ENCODE measurements at regions of chr5 and their contacts with region 1.

Region 1: DNA sequence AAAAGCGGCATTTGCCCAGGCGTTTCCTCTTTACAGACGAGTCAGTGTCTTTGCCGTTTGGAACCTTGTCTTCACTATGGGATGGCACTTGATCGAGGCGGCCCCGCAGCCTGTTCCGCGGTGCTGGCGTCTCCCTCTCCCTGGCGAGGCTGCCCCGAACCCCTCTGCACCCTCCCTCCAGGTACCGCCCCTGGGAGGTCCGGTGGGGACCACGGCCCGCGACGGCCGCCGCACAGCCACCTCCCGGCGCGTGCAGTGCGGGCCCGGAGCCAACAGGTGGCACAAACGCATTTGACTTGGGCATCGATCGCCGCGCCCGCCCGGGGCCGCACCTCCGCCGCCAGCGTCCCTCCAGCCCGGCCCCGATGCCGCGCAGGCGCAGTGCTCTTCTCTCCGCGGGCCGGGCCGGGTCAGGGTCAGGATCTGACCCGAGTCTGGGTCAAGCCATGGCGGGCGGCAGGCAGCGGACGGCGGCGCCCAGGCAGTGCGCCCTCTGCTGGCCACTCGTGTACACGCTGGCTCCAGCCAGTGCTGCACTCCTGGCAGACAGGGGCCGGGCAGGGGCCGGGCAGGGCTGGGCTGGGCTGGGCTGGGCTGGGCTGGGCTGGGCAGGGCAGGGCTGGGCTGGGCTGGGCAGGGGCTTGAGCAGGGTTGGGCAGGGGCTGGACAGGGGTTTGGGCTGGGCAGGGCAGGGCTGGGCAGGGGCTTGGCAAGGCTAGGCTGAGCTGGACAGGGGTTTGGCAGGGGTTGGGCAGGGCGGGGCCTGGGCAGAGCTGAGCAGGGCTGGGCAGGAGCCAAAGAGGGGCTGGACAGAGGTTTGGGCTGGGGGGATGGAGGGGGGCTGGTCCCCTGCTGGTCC is 155.8 kb upstream of the IRX4 start:
- DNase-seq: peak; percentile 76
- ATAC-seq: peak; percentile 92
- H3K4me3 Mint-ChIP-seq: peak overlapping the region; percentile 28
- H3K27ac Mint-ChIP-seq: no peak overlapping the region
- H3K4me1 Mint-ChIP-seq: no peaks in the 10 kb centered on the region
- H3K27me3 Mint-ChIP-seq: peaks cover 25% of the 10 kb centered on the region

Region 2: DNA sequence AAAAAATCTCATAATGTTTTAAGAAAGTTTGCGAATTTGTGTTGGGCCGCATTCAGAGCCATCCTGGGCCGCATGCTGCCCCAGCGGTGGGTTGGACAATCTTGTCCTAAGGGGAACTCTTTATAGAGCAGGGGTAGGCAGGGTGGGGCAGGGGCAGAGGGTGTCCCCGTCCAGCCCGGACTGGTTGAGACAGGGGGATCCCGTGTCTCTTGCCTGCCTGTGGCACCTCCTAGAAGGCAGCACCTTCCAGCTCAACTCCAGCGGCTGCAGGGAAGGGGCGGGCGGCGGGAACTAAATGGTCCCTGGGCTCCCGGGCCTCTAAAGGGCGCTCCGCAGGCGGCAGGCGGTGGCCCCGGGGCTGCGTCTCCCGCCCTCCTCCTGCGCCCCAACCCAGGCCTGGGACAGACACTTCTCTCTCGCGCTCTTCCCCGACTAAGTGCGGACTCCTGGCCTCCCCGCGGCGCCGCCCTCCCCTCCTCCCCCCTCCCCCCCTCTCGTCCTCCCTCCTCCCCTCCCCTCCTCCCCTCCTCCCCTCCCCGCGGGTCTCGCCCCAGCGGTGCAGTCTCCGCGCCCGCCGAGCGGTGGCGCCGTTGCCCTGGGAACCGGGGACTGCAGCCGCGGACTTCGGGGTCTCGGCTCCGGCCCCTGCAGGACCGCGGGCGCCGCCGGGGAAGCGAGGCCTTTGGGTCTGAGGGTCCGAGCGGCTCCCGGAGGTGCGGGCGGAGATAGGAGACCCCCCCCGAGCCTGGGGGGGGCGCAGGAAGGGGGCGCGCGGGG is 371.6 kb before region 1 on chr5:
- CTCF ChIA-PET with region 1: no interaction called
- POLR2A ChIA-PET with region 1: no interaction called
- intact Hi-C with region 1: loop called in 1 of 2 experiments (anchors 1 kb)
- DNase-seq: peak; percentile 76
- ATAC-seq: peak; percentile 63
- H3K4me3 Mint-ChIP-seq: no peak overlapping the region
- H3K27ac Mint-ChIP-seq: no peak overlapping the region
- H3K4me1 Mint-ChIP-seq: peaks cover 13% of the 10 kb centered on the region
- H3K27me3 Mint-ChIP-seq: peaks cover 63% of the 10 kb centered on the region

Region 3: DNA sequence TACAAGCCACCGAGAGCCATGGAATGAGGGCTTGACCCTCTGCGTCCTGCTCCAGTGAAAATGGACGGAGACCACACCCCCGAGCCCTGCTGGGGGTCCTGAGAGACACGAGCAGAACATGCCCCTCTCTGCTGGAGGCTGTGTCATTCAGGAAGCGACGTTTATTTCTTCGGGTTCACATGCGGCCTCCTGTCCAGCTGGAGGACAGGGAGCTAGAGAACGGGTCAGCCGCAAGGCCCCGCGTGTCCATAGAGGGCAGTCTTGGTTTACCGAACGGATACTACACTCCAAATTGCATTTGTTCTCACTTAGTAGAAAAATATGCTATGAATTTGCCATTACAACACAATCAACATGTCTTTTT is 275.0 kb before region 1 on chr5:
- CTCF ChIA-PET with region 1: interaction called, 3 read pairs
- POLR2A ChIA-PET with region 1: no interaction called
- intact Hi-C with region 1: loop called in 1 of 2 experiments (anchors 1 kb)
- DNase-seq: peak; percentile 62
- ATAC-seq: peak; percentile 58
- H3K4me3 Mint-ChIP-seq: no peak overlapping the region
- H3K27ac Mint-ChIP-seq: no peak overlapping the region
- H3K4me1 Mint-ChIP-seq: no peaks in the 10 kb centered on the region
- H3K27me3 Mint-ChIP-seq: peaks cover 6% of the 10 kb centered on the region

Region 4: DNA sequence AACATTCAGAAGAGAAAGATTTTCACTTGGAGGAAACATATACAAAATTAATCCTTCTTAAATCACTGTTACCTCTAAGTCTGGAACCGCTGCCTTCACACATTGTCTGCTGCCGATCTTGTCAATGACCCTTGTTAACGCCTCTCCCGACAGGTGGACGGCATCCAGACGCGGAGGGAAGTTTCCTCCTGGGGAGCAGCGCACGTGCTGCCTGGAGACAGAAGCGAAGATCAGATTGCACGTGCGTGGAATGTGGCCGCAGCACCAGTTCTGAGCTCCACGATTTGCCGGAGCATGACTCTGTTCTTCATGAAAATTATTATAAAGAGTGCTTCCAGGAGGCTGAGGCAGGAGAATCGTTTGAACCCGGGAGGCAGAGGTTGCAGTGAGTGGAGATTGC is 27.8 kb after region 1 on chr5:
- CTCF ChIA-PET with region 1: no interaction called
- POLR2A ChIA-PET with region 1: no interaction called
- intact Hi-C with region 1: no loop called
- DNase-seq: no peak
- ATAC-seq: no peak
- H3K4me3 Mint-ChIP-seq: no peak overlapping the region
- H3K27ac Mint-ChIP-seq: no peak overlapping the region
- H3K4me1 Mint-ChIP-seq: no peaks in the 10 kb centered on the region
- H3K27me3 Mint-ChIP-seq: peaks cover 30% of the 10 kb centered on the region

Region 5: GRCh38 chr5:2149196-2149541 is 110.6 kb after region 1 on chr5:
- CTCF ChIA-PET with region 1: no interaction called
- POLR2A ChIA-PET with region 1: no interaction called
- intact Hi-C with region 1: loop called in 1 of 2 experiments (anchors 1 kb)
- DNase-seq: peak; percentile 15
- ATAC-seq: peak; percentile 30
- H3K4me3 Mint-ChIP-seq: no peak overlapping the region
- H3K27ac Mint-ChIP-seq: no peak overlapping the region
- H3K4me1 Mint-ChIP-seq: no peaks in the 10 kb centered on the region
- H3K27me3 Mint-ChIP-seq: peaks cover 7% of the 10 kb centered on the region

Region 6: DNA sequence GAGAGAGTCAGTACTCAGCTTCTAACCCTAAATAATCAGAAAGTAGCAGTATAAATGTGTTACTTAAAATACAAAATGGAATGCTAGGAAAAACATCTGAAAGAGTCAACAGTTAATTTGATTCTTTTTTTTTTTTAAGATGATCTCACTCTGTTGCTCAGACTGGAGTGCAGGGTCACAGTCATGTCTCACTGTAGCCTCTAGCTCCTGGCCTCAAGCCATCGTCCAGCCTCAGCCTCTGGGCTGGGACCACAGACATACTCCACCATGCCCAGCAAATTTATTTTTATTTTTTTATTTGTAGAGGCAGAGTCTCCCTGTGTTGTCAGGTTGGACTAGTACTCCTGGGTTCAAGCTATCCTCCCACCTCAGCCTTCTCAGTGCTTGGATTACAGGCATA is 288.1 kb after region 1 on chr5:
- CTCF ChIA-PET with region 1: no interaction called
- POLR2A ChIA-PET with region 1: no interaction called
- intact Hi-C with region 1: no loop called
- DNase-seq: no peak
- ATAC-seq: no peak
- H3K4me3 Mint-ChIP-seq: no peak overlapping the region
- H3K27ac Mint-ChIP-seq: no peak overlapping the region
- H3K4me1 Mint-ChIP-seq: no peaks in the 10 kb centered on the region
- H3K27me3 Mint-ChIP-seq: no peaks in the 10 kb centered on the region

Measured in activated CD4-positive, alpha-beta T cell treated with anti-CD3 and anti-CD28 coated beads for 36 hours (primary cell).